ENCODE measurements at regions of chr19 and their contacts with region 1.

Region 1: DNA sequence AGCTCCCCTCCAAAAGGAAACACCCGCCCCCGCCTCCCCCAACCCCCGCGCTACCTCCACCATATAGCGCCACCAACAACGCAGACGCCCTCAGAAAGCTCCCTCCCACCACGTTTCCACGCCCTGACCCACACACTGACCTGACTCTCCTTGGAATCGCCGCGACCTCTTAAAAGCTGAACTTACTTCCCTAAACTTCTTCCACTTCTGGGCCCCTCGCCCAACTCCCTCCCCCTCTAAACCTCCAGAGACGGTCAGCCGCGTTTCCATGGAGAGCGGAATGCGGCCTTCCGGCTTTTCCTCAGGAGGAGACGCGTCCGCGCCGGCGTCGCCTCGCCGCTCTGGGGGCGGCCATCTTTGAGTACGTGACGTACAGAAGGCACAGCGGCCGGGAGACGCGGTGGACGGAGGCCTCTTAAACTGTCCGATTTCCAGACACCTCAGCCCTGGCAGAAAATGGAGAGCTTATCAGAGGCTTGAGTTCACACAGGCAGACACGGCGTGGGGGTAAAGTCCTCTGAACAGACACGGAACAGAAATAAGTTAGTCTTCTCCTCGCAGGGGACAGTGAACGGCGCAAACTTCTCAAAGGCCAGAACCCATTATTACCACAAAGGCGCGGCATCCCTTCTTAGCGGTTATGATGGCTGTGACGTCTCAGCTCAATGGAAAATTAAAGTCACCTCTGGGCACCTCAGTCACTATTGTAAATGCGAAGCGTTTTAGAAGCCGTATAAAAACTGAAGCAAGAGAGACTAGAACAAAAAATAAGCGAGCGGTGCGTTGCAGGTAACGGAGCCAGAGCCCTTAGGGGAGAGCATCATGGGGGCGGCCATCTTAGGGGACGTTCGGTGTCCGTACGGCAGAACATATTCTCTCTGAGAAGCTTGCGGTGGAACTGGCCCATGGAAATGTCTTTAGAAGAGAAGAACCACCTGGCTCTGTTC is at the start of gene ZNF432:
- DNase-seq: peak; percentile 82
- ATAC-seq: peak; percentile 88
- H3K4me3 Mint-ChIP-seq: peak within 1 kb of the TSS; percentile 100
- H3K27ac Mint-ChIP-seq: peak within 1 kb of the TSS; percentile 99
- H3K4me1 Mint-ChIP-seq: peaks cover 19% of the 10 kb centered on the region
- H3K27me3 Mint-ChIP-seq: no peaks in the 10 kb centered on the region
- CTCF ChIP-seq: no peak
- total RNA-seq, gene ZNF432: 18.1 and 18.4 TPM in 2 replicates

Region 2: DNA sequence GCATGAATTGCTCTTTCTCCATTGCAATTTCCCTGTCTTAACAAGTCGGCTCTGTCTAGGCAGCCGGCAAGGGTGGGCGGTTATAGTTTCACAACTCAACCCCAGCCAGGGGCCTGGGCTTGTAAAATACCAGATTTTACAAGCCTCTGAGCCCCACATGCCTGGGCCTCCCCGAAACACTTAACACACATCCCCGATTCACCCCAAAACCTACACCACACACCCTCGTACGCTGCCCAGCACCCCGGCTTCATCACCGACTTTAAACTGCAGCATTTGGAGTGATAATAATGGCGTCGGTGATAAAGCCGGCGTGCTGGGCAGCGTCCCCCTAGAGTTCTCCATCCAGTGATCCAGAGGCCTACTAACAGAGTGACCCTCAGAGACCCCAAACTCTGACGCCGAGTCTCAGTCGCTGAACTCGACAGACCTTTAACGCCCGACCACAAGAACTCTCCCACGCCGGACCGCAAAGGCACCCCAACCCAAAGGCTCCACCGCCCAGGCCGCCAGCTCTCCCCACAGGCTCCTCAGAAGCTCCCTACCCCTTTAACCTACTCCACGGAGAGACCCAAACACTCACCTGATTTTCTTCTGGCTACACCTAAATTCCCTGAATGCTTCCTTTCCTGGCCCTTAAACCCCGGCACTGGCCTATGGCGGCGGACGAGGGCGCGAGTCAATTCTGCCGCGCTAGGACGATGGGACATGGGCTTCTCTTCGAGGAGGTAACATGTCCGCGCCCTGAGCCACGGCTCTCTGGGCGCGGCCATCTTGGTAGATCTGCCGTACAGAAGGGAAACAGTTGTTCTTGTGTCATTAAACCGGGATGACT is 144.3 kb before region 1 on chr19 and contains the start of gene ZNF649:
- CTCF ChIA-PET with region 1: no interaction called
- POLR2A ChIA-PET with region 1: no interaction called
- intact Hi-C with region 1: loop called (anchors 5 kb)
- DNase-seq: peak; percentile 68
- ATAC-seq: peak; percentile 95
- H3K4me3 Mint-ChIP-seq: peak within 1 kb of the TSS; percentile 99
- H3K27ac Mint-ChIP-seq: peak within 1 kb of the TSS; percentile 98
- H3K4me1 Mint-ChIP-seq: peaks cover 24% of the 10 kb centered on the region
- H3K27me3 Mint-ChIP-seq: peaks cover 15% of the 10 kb centered on the region
- CTCF ChIP-seq: no peak
- total RNA-seq, gene ZNF649: 21.9 and 27.4 TPM in 2 replicates

Region 3: GRCh38 chr19:51916167-51916566 is 132.7 kb before region 1 on chr19:
- CTCF ChIA-PET with region 1: no interaction called
- POLR2A ChIA-PET with region 1: no interaction called
- intact Hi-C with region 1: no loop called
- DNase-seq: no peak
- ATAC-seq: no peak
- H3K4me3 Mint-ChIP-seq: no peak overlapping the region
- H3K27ac Mint-ChIP-seq: no peak overlapping the region
- H3K4me1 Mint-ChIP-seq: peaks cover 2% of the 10 kb centered on the region
- H3K27me3 Mint-ChIP-seq: no peaks in the 10 kb centered on the region
- CTCF ChIP-seq: no peak

Region 4: GRCh38 chr19:51980121-51980743 is 68.6 kb before region 1 on chr19:
- CTCF ChIA-PET with region 1: no interaction called
- POLR2A ChIA-PET with region 1: no interaction called
- intact Hi-C with region 1: no loop called
- DNase-seq: no peak
- ATAC-seq: no peak
- H3K4me3 Mint-ChIP-seq: no peak overlapping the region
- H3K27ac Mint-ChIP-seq: no peak overlapping the region
- H3K4me1 Mint-ChIP-seq: peaks cover 6% of the 10 kb centered on the region
- H3K27me3 Mint-ChIP-seq: no peaks in the 10 kb centered on the region
- CTCF ChIP-seq: no peak

Region 5: GRCh38 chr19:52007806-52008557 is 40.8 kb before region 1 on chr19 and contains the start of gene ZNF615:
- CTCF ChIA-PET with region 1: no interaction called
- POLR2A ChIA-PET with region 1: interaction called, 15 read pairs
- intact Hi-C with region 1: loop called (anchors 2 kb)
- DNase-seq: peak; percentile 85
- ATAC-seq: peak; percentile 94
- H3K4me3 Mint-ChIP-seq: peak within 1 kb of the TSS; percentile 93
- H3K27ac Mint-ChIP-seq: peak within 1 kb of the TSS; percentile 99
- H3K4me1 Mint-ChIP-seq: peaks cover 18% of the 10 kb centered on the region
- H3K27me3 Mint-ChIP-seq: no peaks in the 10 kb centered on the region
- CTCF ChIP-seq: no peak
- total RNA-seq, gene ZNF615: 9.1 and 13.5 TPM in 2 replicates

Region 6: GRCh38 chr19:52028027-52028779 is 20.6 kb before region 1 on chr19 and contains the start of gene ZNF614:
- CTCF ChIA-PET with region 1: no interaction called
- POLR2A ChIA-PET with region 1: interaction called, 34 read pairs
- intact Hi-C with region 1: loop called (anchors 1 kb)
- DNase-seq: peak; percentile 86
- ATAC-seq: peak; percentile 89
- H3K4me3 Mint-ChIP-seq: peak within 1 kb of the TSS; percentile 98
- H3K27ac Mint-ChIP-seq: peak within 1 kb of the TSS; percentile 93
- H3K4me1 Mint-ChIP-seq: peaks cover 29% of the 10 kb centered on the region
- H3K27me3 Mint-ChIP-seq: no peaks in the 10 kb centered on the region
- CTCF ChIP-seq: no peak
- total RNA-seq, gene ZNF614: 14.0 and 14.3 TPM in 2 replicates

Region 7: GRCh38 chr19:52095172-52096014 is 46.6 kb after region 1 on chr19 and contains the start of gene ZNF841:
- CTCF ChIA-PET with region 1: no interaction called
- POLR2A ChIA-PET with region 1: interaction called, 4 read pairs
- intact Hi-C with region 1: loop called (anchors 5 kb)
- DNase-seq: peak; percentile 86
- ATAC-seq: peak; percentile 98
- H3K4me3 Mint-ChIP-seq: peak within 1 kb of the TSS; percentile 98
- H3K27ac Mint-ChIP-seq: peak within 1 kb of the TSS; percentile 94
- H3K4me1 Mint-ChIP-seq: peaks cover 30% of the 10 kb centered on the region
- H3K27me3 Mint-ChIP-seq: no peaks in the 10 kb centered on the region
- CTCF ChIP-seq: no peak
- total RNA-seq, gene ZNF841: 34.7 and 42.7 TPM in 2 replicates

Region 8: DNA sequence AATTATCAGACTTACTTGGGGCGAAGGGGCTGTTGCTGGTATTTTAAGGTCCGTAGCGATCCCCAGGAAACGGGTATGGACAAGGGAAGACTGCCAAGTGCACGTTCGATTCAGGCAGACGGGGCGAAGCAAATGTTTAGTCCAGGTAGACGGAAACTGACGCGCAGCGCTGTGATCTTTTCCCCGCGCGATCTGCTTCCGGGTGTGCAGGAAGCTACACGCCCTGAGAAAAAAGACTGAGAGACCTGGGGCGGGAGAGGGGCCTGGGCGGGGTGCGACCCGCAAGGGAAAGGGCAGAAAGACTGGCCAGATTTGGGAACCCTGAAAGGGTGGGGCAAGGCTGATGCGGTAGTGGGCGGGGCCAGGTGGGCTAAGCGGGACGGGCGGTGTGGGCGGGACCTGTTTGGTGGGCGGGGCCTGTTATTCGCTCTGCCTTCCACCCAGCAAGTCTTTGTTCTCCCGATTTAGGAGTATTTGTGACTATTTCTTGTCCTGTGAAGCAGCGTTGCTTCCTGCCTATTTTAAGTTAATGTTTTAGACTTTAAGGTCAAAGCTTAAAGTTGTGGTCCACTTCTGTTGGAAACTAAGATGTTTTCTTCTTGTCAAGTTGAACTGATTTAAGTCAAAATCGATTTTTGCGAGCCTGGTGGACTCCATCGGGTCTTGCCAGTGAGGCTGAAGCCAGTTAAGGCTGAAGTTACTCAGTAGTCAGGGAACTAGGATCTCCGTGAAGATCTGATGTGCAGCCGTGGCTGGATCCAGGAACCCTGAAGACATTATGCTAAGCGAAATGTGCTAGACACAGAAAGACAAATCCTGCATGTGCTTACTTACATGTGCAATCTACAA is 122.7 kb after region 1 on chr19 and contains the start of gene ZNF836:
- CTCF ChIA-PET with region 1: no interaction called
- POLR2A ChIA-PET with region 1: interaction called, 20 read pairs
- intact Hi-C with region 1: no loop called
- DNase-seq: peak; percentile 80
- ATAC-seq: peak; percentile 97
- H3K4me3 Mint-ChIP-seq: peak within 1 kb of the TSS; percentile 97
- H3K27ac Mint-ChIP-seq: peak within 1 kb of the TSS; percentile 96
- H3K4me1 Mint-ChIP-seq: peaks cover 27% of the 10 kb centered on the region
- H3K27me3 Mint-ChIP-seq: no peaks in the 10 kb centered on the region
- CTCF ChIP-seq: no peak
- total RNA-seq, gene ZNF836: 27.4 and 28.0 TPM in 2 replicates

Measured in activated B cell treated with CpG ODN at 0.5 μM for 24 hours (primary cell).